Esophagus muscularis mucosa (tissue), 4 donors: ENCODE measurements at regions of chr7 and their contacts with region 1.

Region 1: GRCh38 chr7:97246317-97246716 is 128.8 kb downstream of the SDHAF3 start:
- DNase-seq: no peak
- H3K4me3 ChIP-seq: no peak overlapping the region
- H3K27ac ChIP-seq: no peak overlapping the region
- H3K4me1 ChIP-seq: no peaks in the 10 kb centered on the region
- H3K27me3 ChIP-seq: no peaks in the 10 kb centered on the region
- CTCF ChIP-seq: no peak
- EP300 ChIP-seq: no peak
- POLR2A ChIP-seq: no peak

Region 2: DNA sequence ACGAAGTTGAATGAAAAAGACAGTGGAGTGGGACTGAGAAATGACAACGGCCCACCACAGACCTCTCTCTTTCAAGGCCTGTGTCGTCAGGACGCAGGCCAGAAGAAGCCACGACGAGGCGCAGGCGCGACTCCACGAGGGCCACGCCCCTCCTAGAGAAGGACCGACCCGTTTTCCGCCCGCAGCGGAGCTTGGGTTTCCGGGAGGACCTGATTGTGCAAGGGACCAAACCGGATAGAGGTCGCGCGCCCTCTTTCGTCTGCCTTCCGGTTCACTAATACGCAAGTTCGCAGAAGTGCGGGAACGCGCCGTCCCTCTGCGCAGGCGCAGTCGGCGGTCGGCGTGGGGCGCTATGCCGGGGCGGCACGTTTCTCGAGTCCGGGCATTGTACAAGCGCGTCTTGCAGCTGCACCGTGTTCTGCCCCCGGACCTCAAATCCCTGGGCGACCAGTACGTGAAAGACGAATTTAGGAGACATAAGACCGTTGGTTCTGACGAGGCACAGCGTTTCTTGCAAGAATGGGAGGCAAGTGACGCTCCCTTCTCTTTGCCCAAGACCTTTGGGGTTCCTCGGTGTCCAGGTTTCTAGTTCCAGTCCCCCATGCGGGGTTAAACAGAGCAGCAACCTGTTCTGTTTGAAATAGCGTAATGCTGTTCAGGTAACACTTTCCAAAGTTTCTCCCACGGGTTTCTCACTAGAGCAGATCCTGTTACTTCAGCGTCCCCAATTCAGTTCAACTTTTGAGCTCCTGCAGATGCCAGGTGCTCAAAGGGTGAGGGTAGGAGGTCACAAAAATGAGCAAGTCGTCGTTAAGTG is 128.7 kb before region 1 on chr7 and contains the start of gene SDHAF3:
- intact Hi-C with region 1: no loop called
- DNase-seq: peak; percentile 99
- H3K4me3 ChIP-seq: peak within 1 kb of the TSS; percentile 58 to 74 (median 68)
- H3K27ac ChIP-seq: peak within 1 kb of the TSS; percentile 70 to 79 (median 76)
- H3K4me1 ChIP-seq: peaks cover 16 to 24% (median 21%) of the 10 kb centered on the region in 4 donors
- H3K27me3 ChIP-seq: no peaks in the 10 kb centered on the region
- CTCF ChIP-seq: peak in 2 of 3 experiments; percentile 8 to 18
- EP300 ChIP-seq: peak; percentile 83
- POLR2A ChIP-seq: peak; percentile 58
- total RNA-seq, gene SDHAF3: 4.0 to 10.4 (median 8.1) TPM

Region 3: DNA sequence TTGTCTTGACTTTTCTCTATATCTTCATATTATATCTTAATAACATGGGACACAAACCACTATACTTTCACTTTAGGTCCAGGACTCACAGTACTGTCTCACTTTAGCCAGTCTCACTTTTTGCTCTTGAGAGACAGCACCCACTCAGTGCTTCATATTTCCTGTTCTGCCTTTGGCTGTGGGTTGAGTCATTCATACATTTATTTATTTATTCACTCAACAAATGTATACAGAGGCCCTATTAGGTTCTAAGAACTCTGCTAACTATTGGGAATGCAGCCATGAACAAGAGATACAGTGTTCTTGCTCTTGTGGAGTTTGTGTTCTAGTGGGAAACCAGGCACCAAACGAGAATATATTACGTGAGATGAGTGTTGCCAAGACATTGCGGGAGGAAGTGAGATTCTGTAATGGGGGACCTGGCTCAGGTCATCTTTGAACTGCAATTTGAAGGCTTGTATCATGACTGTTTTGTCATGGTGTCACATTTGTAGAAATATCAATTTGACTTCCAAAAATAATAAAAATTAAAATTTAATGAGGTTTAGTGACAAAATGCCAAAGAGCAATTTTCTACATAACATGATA is 61.3 kb after region 1 on chr7:
- intact Hi-C with region 1: loop called (anchors 10 kb)
- DNase-seq: no peak
- H3K4me3 ChIP-seq: no peak overlapping the region
- H3K27ac ChIP-seq: no peak overlapping the region
- H3K4me1 ChIP-seq: no peaks in the 10 kb centered on the region
- H3K27me3 ChIP-seq: no peaks in the 10 kb centered on the region
- CTCF ChIP-seq: no peak
- EP300 ChIP-seq: no peak
- POLR2A ChIP-seq: no peak

Region 4: DNA sequence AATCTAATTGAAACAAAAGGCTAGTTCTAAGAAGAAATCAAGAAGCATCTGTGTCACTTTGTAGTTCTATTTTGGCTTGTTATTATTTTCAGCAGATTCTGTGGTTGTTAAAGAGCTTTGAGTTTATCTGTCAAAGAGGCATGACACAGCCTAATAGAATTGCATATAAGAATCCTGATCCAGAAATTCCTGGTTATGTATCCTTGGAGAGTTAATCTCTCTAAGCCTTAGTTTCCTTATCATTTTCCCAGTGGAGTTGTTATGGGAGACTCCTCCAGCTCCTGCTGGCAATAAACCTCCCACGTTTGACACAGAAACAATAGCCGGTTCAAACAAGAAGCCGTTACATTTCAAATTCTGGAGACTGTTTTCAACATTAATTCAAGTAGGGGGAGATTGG is 159.5 kb after region 1 on chr7:
- intact Hi-C with region 1: no loop called
- DNase-seq: no peak
- H3K4me3 ChIP-seq: no peak overlapping the region
- H3K27ac ChIP-seq: no peak overlapping the region
- H3K4me1 ChIP-seq: no peaks in the 10 kb centered on the region
- H3K27me3 ChIP-seq: no peaks in the 10 kb centered on the region
- CTCF ChIP-seq: no peak
- EP300 ChIP-seq: no peak
- POLR2A ChIP-seq: no peak